Activated T-helper 2 cell treated with anti-CD3 and anti-CD28 coated beads, Interferon-gamma antibody, Interleukin-2, Interleukin-4, amounts not matched to agents 10 μg/mL and 5 μg/mL and 100 μg/mL, durations not matched to agents 14 hours and 24 hours and 36 hours (primary cell): ENCODE measurements at regions of chr12 and their contacts with region 1.

Region 1: GRCh38 chr12:48681738-48682532 is at the start of gene KANSL2:
- DNase-seq: peak; percentile 98
- H3K4me3 Mint-ChIP-seq: peak within 1 kb of the TSS; percentile 99
- H3K27ac Mint-ChIP-seq: peak within 1 kb of the TSS; percentile 94
- H3K4me1 Mint-ChIP-seq: peaks cover 38% of the 10 kb centered on the region
- H3K27me3 Mint-ChIP-seq: no peaks in the 10 kb centered on the region
- total RNA-seq, gene KANSL2: 59.5 and 62.7 TPM in 2 replicates

Region 2: DNA sequence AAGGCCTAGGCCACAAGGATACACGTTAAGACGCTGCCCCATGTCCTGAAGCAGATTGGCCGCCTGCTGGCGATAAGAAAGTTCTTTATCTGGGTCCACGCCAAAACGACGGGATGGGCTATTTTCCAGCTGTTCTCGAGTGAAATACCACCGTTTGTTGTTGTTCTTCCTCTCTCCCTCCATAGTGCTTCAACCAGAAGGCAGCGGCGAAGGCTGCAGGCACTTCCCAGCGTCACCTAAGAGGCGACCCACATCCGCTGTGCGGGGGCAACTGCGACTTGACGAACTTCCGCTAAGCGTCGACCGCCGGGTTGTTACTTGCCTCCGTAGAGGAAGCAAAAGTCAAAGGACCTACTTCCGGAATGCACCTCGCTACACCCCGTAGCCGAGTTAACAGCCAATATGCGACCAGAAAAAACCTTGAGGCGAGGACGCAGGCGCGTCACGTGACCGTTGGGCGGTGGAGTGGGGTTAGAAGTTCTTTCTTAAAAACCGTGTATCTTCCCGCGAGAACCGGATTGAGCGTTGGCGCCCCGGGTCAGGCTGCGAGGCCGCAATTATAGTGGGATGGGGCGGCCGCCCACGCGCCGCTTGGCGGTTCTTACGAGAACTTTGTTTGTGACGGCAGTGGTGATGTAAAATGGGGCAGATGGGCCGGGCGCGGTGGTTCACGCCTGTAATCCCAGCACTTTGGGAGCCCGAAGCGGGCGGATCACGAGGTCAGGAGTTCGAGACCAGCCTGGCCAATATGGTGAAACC is 34.7 kb after region 1 on chr12 and contains the start of gene CCNT1:
- intact Hi-C with region 1: loop called (anchors 1 kb)
- DNase-seq: peak; percentile 99
- H3K4me3 Mint-ChIP-seq: peak within 1 kb of the TSS; percentile 92
- H3K27ac Mint-ChIP-seq: peak within 1 kb of the TSS; percentile 95
- H3K4me1 Mint-ChIP-seq: peaks cover 31% of the 10 kb centered on the region
- H3K27me3 Mint-ChIP-seq: no peaks in the 10 kb centered on the region
- total RNA-seq, gene CCNT1: 70.2 and 71.9 TPM in 2 replicates

Region 3: DNA sequence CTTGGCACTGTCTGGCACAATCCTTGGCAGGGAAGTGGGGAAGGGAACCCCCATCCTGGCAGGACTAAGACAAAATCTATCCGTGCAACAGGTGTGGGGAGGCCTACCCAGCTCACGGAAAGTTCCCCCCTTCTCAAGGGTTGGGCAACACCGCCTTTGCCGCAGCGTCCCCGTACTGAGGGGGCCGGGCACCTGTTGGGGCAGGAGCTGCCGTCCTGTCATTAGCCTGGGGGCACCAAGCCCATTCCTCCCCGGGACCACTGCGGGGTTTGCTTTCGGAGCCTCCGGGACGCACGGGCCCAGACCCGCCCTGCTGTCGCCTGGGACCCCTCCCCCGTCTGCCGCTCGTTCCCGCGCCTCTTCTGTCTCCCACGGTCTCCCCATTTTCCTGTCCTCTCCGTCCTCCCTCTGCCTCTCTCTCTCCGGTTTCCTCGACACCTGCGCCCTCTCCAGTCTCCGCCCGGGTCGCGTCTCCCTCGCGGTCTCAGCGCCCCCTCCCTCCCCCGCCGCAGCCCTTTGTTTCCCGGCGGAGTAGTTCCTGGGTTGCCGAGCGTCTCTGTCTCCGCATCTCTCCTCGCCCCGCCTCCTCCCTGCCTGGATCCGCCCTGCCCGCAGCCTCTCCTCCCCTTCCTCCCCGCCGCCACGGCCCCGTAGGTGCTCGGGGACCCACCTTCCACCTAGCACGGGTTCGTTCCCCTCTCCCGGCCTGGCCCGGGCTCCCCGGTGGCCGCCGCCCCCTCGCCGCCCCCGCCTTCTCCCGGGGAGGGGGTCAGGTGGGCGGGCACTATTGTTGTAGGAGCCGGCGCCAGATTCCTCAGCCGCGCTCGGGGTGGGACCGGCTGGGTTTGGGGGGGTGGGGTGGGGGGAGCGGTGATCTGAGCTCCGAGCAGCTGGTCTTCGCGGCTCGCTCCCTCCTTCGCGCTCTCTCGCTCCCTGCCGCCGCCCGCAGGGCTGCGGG is 136.2 kb after region 1 on chr12 and contains the start of gene CACNB3:
- intact Hi-C with region 1: no loop called
- DNase-seq: peak; percentile 72
- H3K4me3 Mint-ChIP-seq: peak within 1 kb of the TSS; percentile 85
- H3K27ac Mint-ChIP-seq: no peak within 1 kb of the TSS
- H3K4me1 Mint-ChIP-seq: peaks cover 25% of the 10 kb centered on the region
- H3K27me3 Mint-ChIP-seq: peaks cover 28% of the 10 kb centered on the region
- total RNA-seq, gene CACNB3: 11.5 and 13.1 TPM in 2 replicates